ENCODE measurements at regions of chr18 and their contacts with region 1.

Region 1: DNA sequence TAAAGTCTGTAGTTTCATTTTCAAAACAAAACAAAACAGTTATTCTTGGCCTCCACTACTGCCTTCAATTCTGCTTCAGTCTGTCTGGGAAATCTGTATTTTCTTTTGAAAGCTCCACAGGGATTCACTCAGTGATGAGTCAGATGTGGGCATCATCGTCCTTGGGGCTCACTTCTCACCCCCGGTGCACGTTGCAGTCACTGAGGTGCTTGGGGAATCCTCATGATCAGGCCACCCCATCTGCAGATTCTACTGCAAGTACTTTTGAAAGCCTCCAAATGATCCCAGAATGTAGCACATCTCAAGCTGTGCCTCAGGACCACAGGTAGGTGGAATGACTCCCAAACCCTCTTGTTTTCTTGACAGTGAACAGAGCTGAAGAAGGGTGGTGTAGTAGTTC is 34.3 kb downstream of the LPIN2 start:
- DNase-seq: peak; percentile 72
- H3K4me3 Mint-ChIP-seq: peak overlapping the region; percentile 73
- H3K27ac Mint-ChIP-seq: peak overlapping the region; percentile 93
- H3K4me1 Mint-ChIP-seq: peaks cover 85% of the 10 kb centered on the region
- H3K27me3 Mint-ChIP-seq: no peaks in the 10 kb centered on the region

Region 2: GRCh38 chr18:2932247-2933181 is 46.1 kb before region 1 on chr18:
- CTCF ChIA-PET with region 1: interaction called, 15 read pairs
- POLR2A ChIA-PET with region 1: interaction called, 8 read pairs
- intact Hi-C with region 1: no loop called
- DNase-seq: no peak
- H3K4me3 Mint-ChIP-seq: peak overlapping the region; percentile 18
- H3K27ac Mint-ChIP-seq: peak overlapping the region; percentile 89
- H3K4me1 Mint-ChIP-seq: peaks cover 45% of the 10 kb centered on the region
- H3K27me3 Mint-ChIP-seq: no peaks in the 10 kb centered on the region

Region 3: GRCh38 chr18:3286159-3286558 is 307.5 kb after region 1 on chr18:
- CTCF ChIA-PET with region 1: no interaction called
- POLR2A ChIA-PET with region 1: no interaction called
- intact Hi-C with region 1: no loop called
- DNase-seq: no peak
- H3K4me3 Mint-ChIP-seq: no peak overlapping the region
- H3K27ac Mint-ChIP-seq: no peak overlapping the region
- H3K4me1 Mint-ChIP-seq: no peaks in the 10 kb centered on the region
- H3K27me3 Mint-ChIP-seq: no peaks in the 10 kb centered on the region